Psoas muscle (tissue), 8 donors: ENCODE measurements at regions of chr1 and their contacts with region 1.

Region 1: GRCh38 chr1:165073185-165074007 is 283.1 kb downstream of the LMX1A start:
- DNase-seq: no peak
- ATAC-seq: peak; percentile 58 to 92 (median 76)
- H3K4me3 ChIP-seq: no peak overlapping the region
- H3K27ac ChIP-seq: no peak overlapping the region
- H3K4me1 ChIP-seq: no peaks in the 10 kb centered on the region
- H3K27me3 ChIP-seq: no peaks in the 10 kb centered on the region
- CTCF ChIP-seq: peak; percentile 85

Region 2: GRCh38 chr1:163361123-163361934 is 1712.1 kb before region 1 on chr1:
- intact Hi-C with region 1: loop called (anchors 5 kb)
- DNase-seq: no peak
- ATAC-seq: no peak
- H3K4me3 ChIP-seq: no peak overlapping the region
- H3K27ac ChIP-seq: no peak overlapping the region
- H3K4me1 ChIP-seq: no peaks in the 10 kb centered on the region
- H3K27me3 ChIP-seq: no peaks in the 10 kb centered on the region
- CTCF ChIP-seq: peak; percentile 46

Region 3: DNA sequence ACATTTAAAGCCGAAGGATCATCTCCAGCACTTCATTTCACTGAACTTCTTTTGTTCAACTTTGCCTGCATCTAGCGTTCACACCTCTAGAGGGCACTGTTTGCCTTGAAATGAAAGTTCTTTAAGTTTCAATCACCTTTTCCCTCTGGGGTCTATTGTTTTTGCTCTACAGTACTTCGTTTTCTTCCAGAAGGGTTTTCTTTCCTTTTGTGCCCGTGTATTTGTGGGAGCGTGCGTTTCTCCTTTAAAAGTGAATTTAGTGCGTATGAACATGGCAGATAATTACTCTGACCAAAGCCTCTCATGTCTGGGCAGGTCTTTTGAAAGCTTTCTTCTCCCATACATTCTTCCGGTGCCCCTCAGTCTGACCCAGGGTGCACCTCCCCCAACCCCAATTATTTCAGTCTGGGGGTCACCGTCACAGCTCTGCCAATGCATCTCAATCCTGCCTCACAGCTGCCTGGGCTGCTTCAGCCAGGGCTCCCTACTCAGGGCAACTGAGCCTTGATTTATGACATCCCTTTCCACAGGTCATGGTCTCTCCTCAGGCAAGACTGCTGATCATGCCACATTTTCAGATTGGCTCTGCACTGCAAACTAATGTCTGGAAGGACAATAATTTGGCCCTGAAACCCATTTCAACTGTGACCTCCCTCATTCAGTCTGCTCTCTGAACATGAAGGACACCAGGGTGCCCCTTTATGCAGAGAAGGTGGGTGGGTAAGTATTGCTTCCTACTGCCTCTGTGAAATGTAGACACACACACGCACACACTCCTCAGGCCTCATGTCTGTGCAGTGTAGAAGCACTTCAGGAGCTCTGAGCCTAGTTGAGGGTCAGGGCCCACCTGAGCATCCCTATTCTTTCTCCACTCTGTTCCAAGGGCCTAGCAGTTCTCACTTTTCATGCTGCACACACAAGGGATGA is 1663.1 kb before region 1 on chr1:
- intact Hi-C with region 1: loop called in 1 of 2 experiments (anchors 2 kb)
- DNase-seq: no peak
- ATAC-seq: no peak
- H3K4me3 ChIP-seq: no peak overlapping the region
- H3K27ac ChIP-seq: no peak overlapping the region
- H3K4me1 ChIP-seq: no peaks in the 10 kb centered on the region
- H3K27me3 ChIP-seq: peaks cover 0 to 1% (median 0%) of the 10 kb centered on the region in 3 donors
- CTCF ChIP-seq: peak; percentile 69

Region 4: GRCh38 chr1:163535807-163536206 is 1537.6 kb before region 1 on chr1:
- intact Hi-C with region 1: loop called in 1 of 2 experiments (anchors 10 kb)
- DNase-seq: no peak
- ATAC-seq: peak in 1 of 4 donors; percentile 45
- H3K4me3 ChIP-seq: no peak overlapping the region
- H3K27ac ChIP-seq: no peak overlapping the region
- H3K4me1 ChIP-seq: no peaks in the 10 kb centered on the region
- H3K27me3 ChIP-seq: no peaks in the 10 kb centered on the region
- CTCF ChIP-seq: peak; percentile 21

Region 5: DNA sequence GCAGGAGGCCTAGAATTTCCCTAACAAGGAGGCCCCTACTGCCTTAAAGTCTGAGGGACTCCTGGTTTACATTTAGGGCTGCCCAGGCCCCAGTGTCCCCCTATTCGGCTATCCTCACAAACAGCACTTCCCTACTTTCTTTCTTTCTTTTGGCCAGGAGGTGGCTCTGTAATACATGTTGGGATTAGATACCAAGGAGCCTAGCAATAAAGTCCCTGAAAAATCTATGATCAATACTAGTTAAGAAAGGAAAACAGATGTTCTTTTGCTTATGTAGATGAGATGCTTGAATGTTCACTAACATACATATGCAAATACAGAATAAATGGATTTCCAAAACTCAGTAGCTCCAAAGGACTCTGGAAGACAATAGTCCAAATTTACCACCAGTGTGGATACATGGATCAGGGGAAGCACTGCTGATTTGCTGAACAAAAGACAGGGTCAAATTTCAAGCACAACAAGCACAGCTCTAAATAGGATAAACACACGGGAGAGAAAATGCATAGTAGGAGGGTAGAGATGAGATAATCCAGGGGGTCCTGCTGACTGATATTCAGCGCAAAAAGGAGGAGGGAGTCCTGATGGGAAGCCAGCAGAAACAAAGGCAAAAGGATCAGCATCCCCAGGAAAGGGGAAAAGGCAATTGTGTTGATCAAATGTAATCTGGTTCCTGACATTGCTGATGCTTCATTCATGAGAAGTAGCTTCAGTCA is 1511.7 kb before region 1 on chr1:
- intact Hi-C with region 1: loop called in 1 of 2 experiments (anchors 10 kb)
- DNase-seq: no peak
- ATAC-seq: no peak
- H3K4me3 ChIP-seq: no peak overlapping the region
- H3K27ac ChIP-seq: no peak overlapping the region
- H3K4me1 ChIP-seq: no peaks in the 10 kb centered on the region
- H3K27me3 ChIP-seq: no peaks in the 10 kb centered on the region
- CTCF ChIP-seq: peak; percentile 19

Region 6: GRCh38 chr1:164823486-164824279 is 249.7 kb before region 1 on chr1:
- intact Hi-C with region 1: loop called in 1 of 2 experiments (anchors 10 kb)
- DNase-seq: no peak
- ATAC-seq: peak; percentile 84 to 93 (median 88)
- H3K4me3 ChIP-seq: peak overlapping the region; percentile 26
- H3K27ac ChIP-seq: peak overlapping the region; percentile 73
- H3K4me1 ChIP-seq: peaks cover 19% of the 10 kb centered on the region
- H3K27me3 ChIP-seq: no peaks in the 10 kb centered on the region
- CTCF ChIP-seq: peak; percentile 26

Region 7: GRCh38 chr1:165124772-165125171 is 51.4 kb after region 1 on chr1:
- intact Hi-C with region 1: no loop called
- DNase-seq: no peak
- ATAC-seq: no peak
- H3K4me3 ChIP-seq: no peak overlapping the region
- H3K27ac ChIP-seq: no peak overlapping the region
- H3K4me1 ChIP-seq: no peaks in the 10 kb centered on the region
- H3K27me3 ChIP-seq: peaks cover 0 to 24% (median 0%) of the 10 kb centered on the region in 3 donors
- CTCF ChIP-seq: no peak